Prostate gland (tissue), 2 donors: ENCODE measurements at regions of chr11 and their contacts with region 1.

Region 1: GRCh38 chr11:17063171-17064002 is 14.1 kb downstream of the RPS13 start:
- DNase-seq: peak; percentile 50
- H3K4me3 ChIP-seq: no peak overlapping the region
- H3K27ac ChIP-seq: no peak overlapping the region
- H3K4me1 ChIP-seq: no peaks in the 10 kb centered on the region
- H3K27me3 ChIP-seq: no peaks in the 10 kb centered on the region
- CTCF ChIP-seq: peak; percentile 55 to 83 (median 81)
- POLR2A ChIP-seq: no peak

Region 2: GRCh38 chr11:16785520-16786128 is 277.8 kb before region 1 on chr11:
- intact Hi-C with region 1: loop called (anchors 10 kb)
- DNase-seq: peak; percentile 76
- H3K4me3 ChIP-seq: no peak overlapping the region
- H3K27ac ChIP-seq: no peak overlapping the region
- H3K4me1 ChIP-seq: no peaks in the 10 kb centered on the region
- H3K27me3 ChIP-seq: no peaks in the 10 kb centered on the region
- CTCF ChIP-seq: peak; percentile 61 to 85 (median 73)
- POLR2A ChIP-seq: no peak

Region 3: DNA sequence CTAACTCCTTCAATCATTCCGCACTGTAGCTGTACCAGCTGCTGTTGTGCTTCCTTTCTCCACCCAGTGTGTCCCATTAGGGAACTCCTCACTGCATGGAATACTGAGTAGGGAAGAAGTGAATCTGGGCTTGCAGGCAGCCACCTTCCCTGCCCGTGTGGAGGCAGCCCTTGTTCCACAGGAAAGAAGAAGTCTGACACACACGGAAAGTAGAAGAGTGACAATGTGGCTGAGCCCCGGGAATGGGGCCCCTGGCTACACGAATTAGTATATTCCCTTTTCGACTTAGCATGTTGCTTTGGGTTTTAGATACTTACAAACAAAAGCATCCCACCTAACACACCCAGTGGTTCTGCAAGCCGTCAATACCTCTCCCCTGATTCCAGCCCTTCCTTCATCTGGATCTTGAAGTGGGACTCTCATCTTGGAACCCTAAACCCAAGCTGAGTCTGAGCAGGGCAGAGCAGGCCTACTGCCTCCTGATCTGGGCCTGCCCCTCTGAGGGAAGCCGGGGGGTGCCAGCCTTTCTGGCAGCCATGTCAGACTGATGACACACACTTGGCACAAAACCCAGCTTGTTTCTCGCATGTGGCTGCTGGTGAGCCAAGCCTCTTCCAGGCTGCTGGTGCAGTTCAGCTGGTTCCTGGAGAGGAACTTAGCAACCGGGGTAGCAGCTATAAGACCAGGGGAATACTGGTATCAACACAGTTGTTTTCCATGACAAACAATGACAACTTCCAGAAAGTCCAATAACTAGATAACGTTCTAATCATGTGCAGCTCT is 253.3 kb before region 1 on chr11:
- intact Hi-C with region 1: loop called (anchors 10 kb)
- DNase-seq: peak; percentile 80
- H3K4me3 ChIP-seq: no peak overlapping the region
- H3K27ac ChIP-seq: no peak overlapping the region
- H3K4me1 ChIP-seq: no peaks in the 10 kb centered on the region
- H3K27me3 ChIP-seq: no peaks in the 10 kb centered on the region
- CTCF ChIP-seq: no peak
- POLR2A ChIP-seq: no peak

Region 4: DNA sequence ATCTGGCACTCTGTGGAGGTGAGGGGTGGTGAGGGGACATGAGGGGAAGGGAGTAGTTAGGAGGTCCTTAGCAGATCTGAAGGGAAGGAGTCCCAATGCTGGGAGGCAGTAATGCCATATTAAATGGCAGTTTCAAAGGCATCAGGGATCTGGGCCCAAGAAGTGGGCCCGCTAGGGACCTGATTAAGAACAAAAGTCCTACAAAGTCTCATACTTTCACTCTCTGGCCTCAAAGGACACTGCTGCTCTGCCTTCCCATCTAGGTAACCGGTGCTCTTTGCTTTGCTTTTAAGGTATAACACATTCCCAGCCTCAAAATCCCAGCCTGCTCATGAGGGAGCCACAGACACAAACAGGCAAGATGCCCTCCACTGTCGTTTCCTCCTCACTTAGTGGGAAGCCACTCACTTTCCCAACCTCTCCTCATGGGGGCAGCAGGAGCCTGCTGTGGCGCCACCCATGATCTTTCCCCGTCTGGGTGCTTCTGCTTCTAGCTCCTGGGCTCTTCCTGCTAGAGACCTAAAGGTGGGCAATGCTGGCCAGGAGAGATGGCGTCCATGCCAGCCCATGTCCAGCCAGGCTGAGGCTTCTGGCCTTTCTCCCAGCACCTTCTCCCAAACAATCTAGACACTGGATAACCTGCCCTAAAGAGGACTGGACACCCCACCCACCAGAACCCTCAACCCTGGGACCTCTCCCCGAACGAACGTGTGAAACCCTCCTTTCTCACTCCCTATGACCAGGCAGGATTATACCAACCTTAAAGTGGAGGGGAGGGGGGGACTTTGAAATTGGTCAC is 117.5 kb before region 1 on chr11:
- intact Hi-C with region 1: loop called (anchors 5 kb)
- DNase-seq: peak; percentile 62
- H3K4me3 ChIP-seq: no peak overlapping the region
- H3K27ac ChIP-seq: no peak overlapping the region
- H3K4me1 ChIP-seq: no peaks in the 10 kb centered on the region
- H3K27me3 ChIP-seq: no peaks in the 10 kb centered on the region
- CTCF ChIP-seq: peak; percentile 11 to 82 (median 54)
- POLR2A ChIP-seq: no peak

Region 5: DNA sequence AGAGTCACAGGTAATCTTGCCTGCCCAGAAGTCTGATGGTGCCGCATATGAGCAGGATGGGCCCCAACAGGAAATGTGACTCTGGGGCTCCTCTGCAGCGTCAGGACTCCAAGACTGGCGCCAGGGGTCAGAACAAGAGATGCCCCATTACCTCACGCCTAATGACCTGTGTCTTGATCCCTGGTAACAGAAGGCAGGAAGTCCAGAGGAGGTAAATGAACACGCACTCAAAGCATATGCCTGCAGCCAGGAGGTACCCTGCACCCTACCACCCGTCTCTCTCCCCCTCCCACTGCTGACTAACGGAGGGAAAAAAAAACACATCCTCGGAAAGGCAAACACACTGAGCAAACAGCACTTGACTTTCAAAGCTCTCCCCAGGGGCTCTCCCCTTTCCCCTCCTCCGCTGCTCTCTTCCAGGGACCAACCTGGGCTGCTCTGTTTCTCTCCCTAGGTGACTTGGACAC is 376.0 kb after region 1 on chr11:
- intact Hi-C with region 1: no loop called
- DNase-seq: no peak
- H3K4me3 ChIP-seq: no peak overlapping the region
- H3K27ac ChIP-seq: no peak overlapping the region
- H3K4me1 ChIP-seq: no peaks in the 10 kb centered on the region
- H3K27me3 ChIP-seq: no peaks in the 10 kb centered on the region
- CTCF ChIP-seq: no peak
- POLR2A ChIP-seq: no peak